ENCODE measurements at regions of chr14 and their contacts with region 1.

Region 1: DNA sequence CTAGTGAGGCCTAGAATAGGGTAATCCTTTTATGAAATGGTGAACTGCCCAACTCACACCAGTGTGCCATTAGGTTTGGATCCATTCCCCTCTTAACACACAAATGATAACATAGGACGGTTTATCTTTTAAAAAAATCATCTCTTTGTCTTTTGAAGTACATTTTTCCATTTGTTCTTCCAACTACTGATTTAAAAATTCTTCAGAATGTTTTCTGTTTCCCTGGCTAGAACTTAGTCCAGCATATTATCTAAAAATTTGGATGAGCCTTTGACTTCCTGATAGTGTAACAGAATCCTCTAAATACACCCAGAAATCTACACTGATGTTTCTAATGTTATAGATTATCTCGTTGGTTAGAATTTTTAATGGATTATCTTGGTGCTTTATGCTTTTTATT is 249.7 kb upstream of the NPAS3 start:
- DNase-seq: no peak
- ATAC-seq: no peak
- H3K4me3 ChIP-seq: no peak overlapping the region
- H3K4me3 Mint-ChIP-seq: no peak overlapping the region
- H3K27ac ChIP-seq: no peak overlapping the region
- H3K27ac Mint-ChIP-seq: no peak overlapping the region
- H3K4me1 ChIP-seq: no peaks in the 10 kb centered on the region
- H3K4me1 Mint-ChIP-seq: no peaks in the 10 kb centered on the region
- H3K27me3 ChIP-seq: no peaks in the 10 kb centered on the region
- H3K27me3 Mint-ChIP-seq: no peaks in the 10 kb centered on the region
- CTCF ChIP-seq: no peak

Region 2: GRCh38 chr14:32667796-32668195 is 21.1 kb before region 1 on chr14:
- CTCF ChIA-PET with region 1: no interaction called
- POLR2A ChIA-PET with region 1: no interaction called
- intact Hi-C with region 1: loop called in 1 of 2 experiments (anchors 1 kb)
- DNase-seq: no peak
- ATAC-seq: no peak
- H3K4me3 ChIP-seq: no peak overlapping the region
- H3K4me3 Mint-ChIP-seq: no peak overlapping the region
- H3K27ac ChIP-seq: no peak overlapping the region
- H3K27ac Mint-ChIP-seq: no peak overlapping the region
- H3K4me1 ChIP-seq: no peaks in the 10 kb centered on the region
- H3K4me1 Mint-ChIP-seq: no peaks in the 10 kb centered on the region
- H3K27me3 ChIP-seq: no peaks in the 10 kb centered on the region
- H3K27me3 Mint-ChIP-seq: no peaks in the 10 kb centered on the region
- CTCF ChIP-seq: no peak

Region 3: DNA sequence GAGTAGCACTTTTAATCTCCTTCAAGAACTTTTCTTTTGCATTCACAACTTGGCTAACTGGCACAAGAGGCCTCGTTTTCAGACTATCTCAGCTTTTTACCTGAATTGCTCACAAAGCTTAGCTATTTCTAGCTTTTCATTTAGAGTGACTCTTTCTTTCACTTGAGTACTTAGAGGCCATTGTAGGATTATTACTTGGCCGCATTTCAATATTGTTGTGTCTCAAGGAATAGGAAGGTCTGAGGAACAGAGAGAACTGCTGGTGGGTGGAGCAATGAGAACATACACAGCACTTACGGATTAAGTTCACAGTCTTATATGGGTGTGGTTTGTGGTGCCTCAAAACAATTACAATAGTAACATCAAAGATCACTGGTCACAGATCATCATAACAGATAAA is 24.9 kb after region 1 on chr14:
- CTCF ChIA-PET with region 1: no interaction called
- POLR2A ChIA-PET with region 1: no interaction called
- intact Hi-C with region 1: no loop called
- DNase-seq: no peak
- ATAC-seq: no peak
- H3K4me3 ChIP-seq: no peak overlapping the region
- H3K4me3 Mint-ChIP-seq: no peak overlapping the region
- H3K27ac ChIP-seq: no peak overlapping the region
- H3K27ac Mint-ChIP-seq: no peak overlapping the region
- H3K4me1 ChIP-seq: no peaks in the 10 kb centered on the region
- H3K4me1 Mint-ChIP-seq: no peaks in the 10 kb centered on the region
- H3K27me3 ChIP-seq: no peaks in the 10 kb centered on the region
- H3K27me3 Mint-ChIP-seq: no peaks in the 10 kb centered on the region
- CTCF ChIP-seq: no peak

Region 4: DNA sequence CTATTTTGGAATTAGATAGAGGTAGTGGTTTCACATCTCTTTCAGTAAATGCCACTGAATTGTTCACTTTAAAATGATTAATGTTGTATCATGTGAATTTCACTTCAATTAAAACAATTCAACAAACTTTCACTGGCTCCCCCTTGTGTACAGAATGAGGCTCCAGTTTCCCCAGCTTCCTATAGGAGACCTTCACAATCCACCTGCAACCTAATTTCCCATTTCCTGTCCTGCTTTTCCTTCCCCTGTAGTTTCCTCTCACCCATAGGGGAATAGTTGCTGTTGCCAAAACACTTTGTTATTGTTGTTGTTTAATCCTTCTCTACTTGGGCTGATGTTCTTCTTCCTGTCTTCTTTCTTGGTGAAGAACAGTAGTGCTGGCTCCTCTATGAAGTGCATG is 309.5 kb after region 1 on chr14:
- CTCF ChIA-PET with region 1: no interaction called
- POLR2A ChIA-PET with region 1: no interaction called
- intact Hi-C with region 1: no loop called
- DNase-seq: no peak
- ATAC-seq: no peak
- H3K4me3 ChIP-seq: no peak overlapping the region
- H3K4me3 Mint-ChIP-seq: no peak overlapping the region
- H3K27ac ChIP-seq: no peak overlapping the region
- H3K27ac Mint-ChIP-seq: no peak overlapping the region
- H3K4me1 ChIP-seq: no peaks in the 10 kb centered on the region
- H3K4me1 Mint-ChIP-seq: no peaks in the 10 kb centered on the region
- H3K27me3 ChIP-seq: no peaks in the 10 kb centered on the region
- H3K27me3 Mint-ChIP-seq: no peaks in the 10 kb centered on the region
- CTCF ChIP-seq: no peak